Activated CD4-positive, alpha-beta memory T cell treated with anti-CD3 and anti-CD28 coated beads for 36 hours (primary cell): ENCODE measurements at regions of chr13 and their contacts with region 1.

Region 1: DNA sequence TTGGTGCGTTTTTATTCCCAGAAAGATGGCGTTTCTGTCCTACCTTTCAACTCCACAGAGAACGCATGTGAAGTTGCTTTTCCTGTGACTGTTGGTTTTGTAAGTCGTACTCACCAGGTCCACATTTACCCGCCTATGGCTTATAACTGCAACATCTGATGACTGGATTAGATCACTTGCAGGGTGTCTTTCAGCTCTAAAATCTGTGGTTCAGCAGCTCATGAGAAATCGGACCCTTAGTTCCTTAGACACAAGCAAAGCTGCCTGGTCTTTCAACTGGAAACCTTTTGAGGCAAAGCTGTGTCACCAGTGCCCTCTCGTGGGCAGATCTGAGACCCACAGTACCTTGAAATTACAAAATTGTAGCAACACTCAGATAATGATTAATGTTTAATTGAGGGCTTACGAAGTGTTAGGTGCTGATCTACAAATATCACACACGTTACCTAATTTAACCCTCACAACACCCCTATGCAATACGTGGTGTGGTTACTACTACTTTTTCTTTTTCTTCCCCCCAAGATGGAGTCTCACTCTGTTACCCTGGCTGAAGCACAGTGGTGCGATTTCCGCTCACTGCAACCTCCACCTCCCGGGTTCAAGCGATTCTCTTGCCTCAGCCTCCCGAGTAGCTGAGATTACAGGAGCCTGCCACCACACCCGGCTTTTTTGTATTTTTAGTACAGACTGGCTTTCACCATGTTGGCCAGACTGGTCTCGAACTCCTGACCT is 65.4 kb downstream of the RUBCNL start:
- DNase-seq: peak; percentile 83
- H3K4me3 Mint-ChIP-seq: peak overlapping the region; percentile 68
- H3K27ac Mint-ChIP-seq: peak overlapping the region; percentile 78
- H3K4me1 Mint-ChIP-seq: peaks cover 16% of the 10 kb centered on the region
- H3K27me3 Mint-ChIP-seq: peaks cover 2% of the 10 kb centered on the region

Region 2: GRCh38 chr13:45511310-45512097 is 810.2 kb before region 1 on chr13:
- CTCF ChIA-PET with region 1: interaction called, 5 read pairs
- POLR2A ChIA-PET with region 1: no interaction called
- intact Hi-C with region 1: loop called (anchors 1 kb)
- DNase-seq: peak; percentile 13
- H3K4me3 Mint-ChIP-seq: no peak overlapping the region
- H3K27ac Mint-ChIP-seq: peak overlapping the region; percentile 70
- H3K4me1 Mint-ChIP-seq: peaks cover 13% of the 10 kb centered on the region
- H3K27me3 Mint-ChIP-seq: no peaks in the 10 kb centered on the region

Region 3: GRCh38 chr13:45807520-45808099 is 514.0 kb before region 1 on chr13:
- CTCF ChIA-PET with region 1: interaction called, 15 read pairs
- POLR2A ChIA-PET with region 1: no interaction called
- intact Hi-C with region 1: loop called (anchors 5 kb)
- DNase-seq: peak; percentile 41
- H3K4me3 Mint-ChIP-seq: no peak overlapping the region
- H3K27ac Mint-ChIP-seq: no peak overlapping the region
- H3K4me1 Mint-ChIP-seq: peaks cover 3% of the 10 kb centered on the region
- H3K27me3 Mint-ChIP-seq: no peaks in the 10 kb centered on the region

Region 4: GRCh38 chr13:46160471-46161066 is 161.1 kb before region 1 on chr13:
- CTCF ChIA-PET with region 1: interaction called, 13 read pairs
- POLR2A ChIA-PET with region 1: no interaction called
- intact Hi-C with region 1: no loop called
- DNase-seq: no peak
- H3K4me3 Mint-ChIP-seq: peak overlapping the region; percentile 53
- H3K27ac Mint-ChIP-seq: peak overlapping the region; percentile 79
- H3K4me1 Mint-ChIP-seq: peaks cover 60% of the 10 kb centered on the region
- H3K27me3 Mint-ChIP-seq: no peaks in the 10 kb centered on the region

Region 5: GRCh38 chr13:46278474-46278873 is 43.2 kb before region 1 on chr13:
- CTCF ChIA-PET with region 1: interaction called, 10 read pairs
- POLR2A ChIA-PET with region 1: no interaction called
- intact Hi-C with region 1: no loop called
- DNase-seq: no peak
- H3K4me3 Mint-ChIP-seq: no peak overlapping the region
- H3K27ac Mint-ChIP-seq: no peak overlapping the region
- H3K4me1 Mint-ChIP-seq: no peaks in the 10 kb centered on the region
- H3K27me3 Mint-ChIP-seq: peaks cover 1% of the 10 kb centered on the region

Region 6: GRCh38 chr13:46295491-46296114 is 26.1 kb before region 1 on chr13:
- CTCF ChIA-PET with region 1: interaction called, 31 read pairs
- POLR2A ChIA-PET with region 1: interaction called, 3 read pairs
- intact Hi-C with region 1: loop called (anchors 1 kb)
- DNase-seq: peak; percentile 78
- H3K4me3 Mint-ChIP-seq: peak overlapping the region; percentile 61
- H3K27ac Mint-ChIP-seq: peak overlapping the region; percentile 93
- H3K4me1 Mint-ChIP-seq: peaks cover 53% of the 10 kb centered on the region
- H3K27me3 Mint-ChIP-seq: no peaks in the 10 kb centered on the region